Activated CD4-positive, alpha-beta memory T cell treated with anti-CD3 and anti-CD28 coated beads for 36 hours (primary cell): ENCODE measurements at regions of chr22 and their contacts with region 1.

Region 1: GRCh38 chr22:31080848-31081649 is at the start of gene SMTN:
- DNase-seq: peak; percentile 92
- H3K4me3 Mint-ChIP-seq: peak within 1 kb of the TSS; percentile 85
- H3K27ac Mint-ChIP-seq: peak within 1 kb of the TSS; percentile 45
- H3K4me1 Mint-ChIP-seq: peaks cover 30% of the 10 kb centered on the region
- H3K27me3 Mint-ChIP-seq: no peaks in the 10 kb centered on the region
- total RNA-seq, gene SMTN: 55.1 to 57.4 TPM

Region 2: DNA sequence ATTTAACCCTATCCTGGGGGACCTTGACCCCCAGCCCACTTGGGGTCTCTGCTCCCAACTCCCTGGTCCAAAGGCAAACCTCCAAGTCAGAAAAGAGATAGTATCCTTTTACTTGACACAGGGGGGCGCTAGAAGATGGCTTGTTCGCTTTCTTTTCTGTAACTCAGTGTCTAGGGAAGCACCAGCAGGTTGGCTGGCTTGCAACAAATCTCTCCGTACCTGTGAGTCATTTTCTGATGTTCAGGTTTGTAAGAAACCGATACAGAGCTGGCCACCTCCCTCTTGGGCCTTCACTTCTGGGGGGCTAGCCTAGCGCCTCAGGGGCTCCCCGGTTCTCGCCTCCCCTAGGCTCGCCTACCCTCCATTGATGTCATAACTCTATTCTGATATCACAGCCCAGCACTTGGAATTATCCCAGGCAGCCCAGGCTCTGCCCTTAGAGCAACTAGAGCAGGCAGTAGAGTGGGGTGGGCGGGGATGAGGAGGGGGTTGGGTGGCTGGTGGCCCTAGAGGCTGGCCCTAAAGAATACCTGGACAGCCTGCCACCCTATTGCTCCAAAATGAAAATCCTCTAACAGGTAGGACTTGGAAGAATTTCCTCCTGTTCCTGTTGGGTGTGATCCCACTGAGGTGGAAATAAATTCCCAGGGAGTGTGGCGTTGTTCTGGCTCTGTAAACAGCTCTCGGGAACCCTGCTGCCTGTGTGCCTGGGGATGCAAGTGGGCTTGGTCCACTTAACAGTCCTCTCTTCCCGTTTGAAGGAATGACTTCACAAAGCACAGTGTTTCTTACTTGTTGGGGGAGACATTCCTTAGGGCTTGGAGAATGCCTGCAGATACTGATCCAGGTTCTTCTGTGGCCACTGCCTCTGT is 317.0 kb before region 1 on chr22:
- CTCF ChIA-PET with region 1: interaction called, 8 read pairs
- POLR2A ChIA-PET with region 1: no interaction called
- intact Hi-C with region 1: loop called (anchors 1 kb)
- DNase-seq: peak; percentile 66
- H3K4me3 Mint-ChIP-seq: no peak overlapping the region
- H3K27ac Mint-ChIP-seq: no peak overlapping the region
- H3K4me1 Mint-ChIP-seq: no peaks in the 10 kb centered on the region
- H3K27me3 Mint-ChIP-seq: no peaks in the 10 kb centered on the region

Region 3: GRCh38 chr22:30940685-30941362 is 140.2 kb before region 1 on chr22:
- CTCF ChIA-PET with region 1: interaction called, 23 read pairs
- POLR2A ChIA-PET with region 1: interaction called, 3 read pairs
- intact Hi-C with region 1: loop called (anchors 2 kb)
- DNase-seq: peak; percentile 70
- H3K4me3 Mint-ChIP-seq: peak overlapping the region; percentile 61
- H3K27ac Mint-ChIP-seq: peak overlapping the region; percentile 89
- H3K4me1 Mint-ChIP-seq: peaks cover 72% of the 10 kb centered on the region
- H3K27me3 Mint-ChIP-seq: no peaks in the 10 kb centered on the region

Region 4: GRCh38 chr22:30968924-30969539 is 112.0 kb before region 1 on chr22 and contains the start of gene TUG1:
- CTCF ChIA-PET with region 1: interaction called, 16 read pairs
- POLR2A ChIA-PET with region 1: interaction called, 28 read pairs
- intact Hi-C with region 1: loop called (anchors 2 kb)
- DNase-seq: peak; percentile 98
- H3K4me3 Mint-ChIP-seq: peak within 1 kb of the TSS; percentile 85
- H3K27ac Mint-ChIP-seq: peak within 1 kb of the TSS; percentile 89
- H3K4me1 Mint-ChIP-seq: peaks cover 64% of the 10 kb centered on the region
- H3K27me3 Mint-ChIP-seq: peaks cover 1% of the 10 kb centered on the region
- total RNA-seq, gene TUG1: 35.6 to 38.3 TPM

Region 5: DNA sequence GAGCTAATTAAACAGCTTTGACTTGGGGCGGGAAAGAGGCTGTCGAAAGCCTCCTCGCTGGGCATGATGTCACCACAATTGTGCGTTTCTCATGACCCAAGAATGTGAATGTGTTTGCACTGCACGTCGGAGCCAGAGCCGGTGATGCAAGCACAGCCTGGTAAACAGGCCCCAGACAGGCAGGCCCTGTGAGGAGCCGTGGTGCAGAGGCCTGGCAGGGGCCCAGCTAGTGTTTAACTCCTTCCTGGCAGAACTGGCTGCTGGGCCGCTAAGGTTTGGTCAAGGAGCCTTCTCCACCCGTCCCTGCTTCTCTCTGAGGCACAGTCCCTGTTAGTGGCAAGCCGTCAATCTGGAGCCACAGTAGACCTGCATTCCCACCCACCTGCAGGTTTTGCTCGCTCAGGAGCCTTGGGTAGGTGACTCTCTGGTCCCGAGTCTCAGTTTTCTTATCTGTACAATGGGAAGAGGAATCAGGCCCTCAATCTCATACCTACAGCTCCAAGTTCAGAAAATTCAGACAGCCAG is 25.4 kb before region 1 on chr22:
- CTCF ChIA-PET with region 1: no interaction called
- POLR2A ChIA-PET with region 1: no interaction called
- intact Hi-C with region 1: no loop called
- DNase-seq: no peak
- H3K4me3 Mint-ChIP-seq: no peak overlapping the region
- H3K27ac Mint-ChIP-seq: no peak overlapping the region
- H3K4me1 Mint-ChIP-seq: no peaks in the 10 kb centered on the region
- H3K27me3 Mint-ChIP-seq: no peaks in the 10 kb centered on the region

Region 6: GRCh38 chr22:31160328-31160978 is 79.4 kb after region 1 on chr22:
- CTCF ChIA-PET with region 1: interaction called, 3 read pairs
- POLR2A ChIA-PET with region 1: no interaction called
- intact Hi-C with region 1: loop called (anchors 2 kb)
- DNase-seq: peak; percentile 29
- H3K4me3 Mint-ChIP-seq: peak overlapping the region; percentile 99
- H3K27ac Mint-ChIP-seq: peak overlapping the region; percentile 97
- H3K4me1 Mint-ChIP-seq: peaks cover 34% of the 10 kb centered on the region
- H3K27me3 Mint-ChIP-seq: no peaks in the 10 kb centered on the region